Mammary epithelial cell (primary cell): ENCODE measurements at regions of chr21 and their contacts with region 1.

Region 1: DNA sequence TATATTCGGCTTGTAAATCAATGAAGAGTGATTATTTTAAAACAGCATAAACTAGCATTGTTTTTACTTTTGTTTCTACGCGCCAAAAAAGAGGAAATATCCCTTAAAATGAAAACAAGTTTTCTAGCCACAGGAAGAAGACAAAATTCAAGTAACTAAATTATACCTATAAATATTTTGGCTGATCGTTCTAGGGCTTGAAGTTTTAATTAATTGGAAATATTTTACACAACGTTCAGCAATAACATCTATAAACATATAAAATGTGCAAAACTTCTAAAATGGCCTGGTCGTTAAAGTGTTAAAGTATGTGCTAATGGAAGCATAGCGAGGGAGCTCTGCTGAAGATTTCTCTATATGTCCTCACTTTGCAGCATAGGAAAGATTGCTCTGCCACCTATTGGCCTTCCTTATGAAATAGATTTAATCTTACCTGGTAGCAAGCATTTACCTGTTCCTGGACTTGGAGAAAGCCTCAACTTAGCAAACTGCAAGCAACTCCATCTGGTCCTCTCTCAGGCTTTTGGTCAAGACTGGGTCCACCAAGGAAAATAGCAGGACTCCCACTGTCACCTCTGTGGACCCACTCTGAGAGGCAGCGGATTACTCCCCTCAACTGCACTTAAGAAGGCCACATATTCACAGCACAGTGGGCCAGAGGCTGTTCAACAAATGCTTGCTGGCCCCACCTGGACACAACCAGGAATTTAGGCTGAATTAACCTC is 351.3 kb upstream of the RUNX1 start:
- DNase-seq: peak; percentile 81
- H3K4me3 ChIP-seq: peak overlapping the region in 1 of 3 experiments; percentile 30
- H3K27ac ChIP-seq: peak overlapping the region; percentile 80
- H3K4me1 ChIP-seq: peaks cover 36% of the 10 kb centered on the region
- H3K27me3 ChIP-seq: no peaks in the 10 kb centered on the region
- CTCF ChIP-seq: peak; percentile 57 to 69

Region 2: GRCh38 chr21:34745557-34746255 is 654.7 kb before region 1 on chr21:
- CTCF ChIA-PET with region 1: no interaction called
- dilution Hi-C with region 1: no loop called
- in situ Hi-C with region 1: loop called in 1 of 2 experiments (anchors 10 kb)
- intact Hi-C with region 1: loop called (anchors 1 kb)
- DNase-seq: peak; percentile 63
- H3K4me3 ChIP-seq: no peak overlapping the region
- H3K27ac ChIP-seq: no peak overlapping the region
- H3K4me1 ChIP-seq: peaks cover 31% of the 10 kb centered on the region
- H3K27me3 ChIP-seq: no peaks in the 10 kb centered on the region
- CTCF ChIP-seq: peak; percentile 84 to 96

Region 3: DNA sequence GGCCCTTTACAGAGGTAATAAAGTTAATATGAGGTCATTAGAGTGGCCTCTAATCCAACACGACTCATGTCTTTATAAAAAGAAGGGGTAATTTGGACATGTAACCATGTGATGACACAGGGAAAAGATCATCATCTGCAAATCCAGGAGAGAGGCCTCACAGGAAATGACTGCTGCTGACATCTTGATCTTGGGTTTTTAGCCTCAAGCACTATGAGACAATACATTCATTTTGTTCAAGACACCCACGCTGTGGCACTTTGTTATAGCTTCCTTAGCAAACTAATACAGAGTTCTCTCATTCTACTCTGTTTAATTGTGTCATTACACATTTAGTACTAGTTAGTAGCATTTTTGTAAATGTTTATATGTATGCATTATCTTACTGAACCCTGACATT is 287.3 kb before region 1 on chr21:
- CTCF ChIA-PET with region 1: no interaction called
- dilution Hi-C with region 1: no loop called
- in situ Hi-C with region 1: no loop called
- intact Hi-C with region 1: no loop called
- DNase-seq: peak; percentile 78
- H3K4me3 ChIP-seq: no peak overlapping the region
- H3K27ac ChIP-seq: peak overlapping the region; percentile 48
- H3K4me1 ChIP-seq: peaks cover 28% of the 10 kb centered on the region
- H3K27me3 ChIP-seq: no peaks in the 10 kb centered on the region
- CTCF ChIP-seq: no peak

Region 4: GRCh38 chr21:35198031-35198431 is 202.4 kb before region 1 on chr21:
- CTCF ChIA-PET with region 1: interaction called, 3 read pairs
- dilution Hi-C with region 1: no loop called
- in situ Hi-C with region 1: no loop called
- intact Hi-C with region 1: loop called (anchors 2 kb)
- DNase-seq: peak; percentile 99
- H3K4me3 ChIP-seq: no peak overlapping the region
- H3K27ac ChIP-seq: peak overlapping the region; percentile 96
- H3K4me1 ChIP-seq: peaks cover 23% of the 10 kb centered on the region
- H3K27me3 ChIP-seq: no peaks in the 10 kb centered on the region
- CTCF ChIP-seq: no peak

Region 5: DNA sequence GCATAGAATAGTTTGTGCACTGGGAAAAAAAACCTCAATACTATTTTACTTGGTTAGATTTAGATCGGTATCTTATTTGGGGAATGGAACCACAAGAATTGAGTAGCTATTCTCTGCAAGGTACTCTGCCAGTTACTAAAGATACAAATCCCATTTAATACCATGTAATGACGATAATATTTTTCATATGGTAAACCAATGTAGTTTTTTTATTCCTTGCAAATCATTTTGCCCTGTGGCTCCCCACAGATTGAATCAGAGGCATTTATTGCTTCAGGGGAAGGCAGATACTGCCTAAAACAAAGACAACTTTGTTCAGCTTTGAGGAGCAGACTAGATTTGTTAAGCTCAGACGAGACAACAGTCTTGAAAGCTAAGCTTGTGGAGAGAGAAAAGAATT is 124.6 kb before region 1 on chr21:
- CTCF ChIA-PET with region 1: no interaction called
- dilution Hi-C with region 1: loop called (anchors 5 kb)
- in situ Hi-C with region 1: no loop called
- intact Hi-C with region 1: no loop called
- DNase-seq: peak; percentile 98
- H3K4me3 ChIP-seq: peak overlapping the region in 1 of 3 experiments; percentile 34
- H3K27ac ChIP-seq: peak overlapping the region; percentile 97
- H3K4me1 ChIP-seq: peaks cover 34% of the 10 kb centered on the region
- H3K27me3 ChIP-seq: no peaks in the 10 kb centered on the region
- CTCF ChIP-seq: no peak

Region 6: GRCh38 chr21:35833991-35834390 is 433.6 kb after region 1 on chr21:
- CTCF ChIA-PET with region 1: no interaction called
- dilution Hi-C with region 1: loop called (anchors 25 kb)
- in situ Hi-C with region 1: loop called in 1 of 2 experiments (anchors 10 kb)
- intact Hi-C with region 1: no loop called
- DNase-seq: no peak
- H3K4me3 ChIP-seq: no peak overlapping the region
- H3K27ac ChIP-seq: no peak overlapping the region
- H3K4me1 ChIP-seq: no peaks in the 10 kb centered on the region
- H3K27me3 ChIP-seq: no peaks in the 10 kb centered on the region
- CTCF ChIP-seq: no peak

Region 7: DNA sequence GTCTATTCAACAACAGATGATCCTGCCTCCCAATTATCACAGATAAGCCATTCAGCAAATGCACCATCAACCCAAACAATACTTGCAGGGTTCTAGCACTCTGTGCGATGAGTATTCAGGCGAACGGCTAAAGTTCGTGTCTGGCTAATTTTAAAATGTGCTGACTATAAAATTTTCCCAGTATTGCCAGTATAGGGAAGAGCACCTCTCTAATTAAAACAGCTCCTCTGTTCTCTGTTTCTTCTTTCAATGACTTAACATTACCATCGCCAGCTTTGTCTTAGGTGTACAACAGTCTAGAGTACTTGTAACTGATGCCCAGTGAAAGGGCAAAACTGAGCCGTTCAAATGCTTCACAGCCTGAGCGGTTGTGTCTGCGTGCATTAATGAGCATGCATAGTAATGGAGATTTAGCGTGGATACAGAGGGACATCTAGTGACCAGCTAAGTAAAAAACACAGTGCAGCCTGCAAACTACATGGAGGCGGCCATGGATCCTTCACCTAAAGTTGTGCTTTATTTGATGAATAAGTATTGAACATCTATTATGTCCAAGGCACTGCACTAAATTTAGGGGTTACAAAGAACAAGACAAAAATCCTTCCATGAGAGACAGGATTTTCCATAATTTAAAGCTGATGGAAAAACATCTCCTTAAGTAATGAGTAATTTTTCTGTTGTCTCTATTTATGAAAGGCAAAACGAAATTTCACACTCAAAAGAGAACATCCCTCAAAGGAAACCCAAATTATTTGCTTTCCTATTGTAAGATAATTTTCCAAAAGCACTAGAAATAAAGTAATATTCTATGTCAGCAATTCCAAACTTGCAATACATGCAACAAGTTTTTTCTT is 539.9 kb after region 1 on chr21:
- CTCF ChIA-PET with region 1: no interaction called
- dilution Hi-C with region 1: no loop called
- in situ Hi-C with region 1: loop called in 1 of 2 experiments (anchors 25 kb)
- intact Hi-C with region 1: loop called (anchors 2 kb)
- DNase-seq: peak; percentile 66
- H3K4me3 ChIP-seq: no peak overlapping the region
- H3K27ac ChIP-seq: no peak overlapping the region
- H3K4me1 ChIP-seq: no peaks in the 10 kb centered on the region
- H3K27me3 ChIP-seq: no peaks in the 10 kb centered on the region
- CTCF ChIP-seq: peak; percentile 77